ENCODE measurements at regions of chr6 and their contacts with region 1.

Region 1: DNA sequence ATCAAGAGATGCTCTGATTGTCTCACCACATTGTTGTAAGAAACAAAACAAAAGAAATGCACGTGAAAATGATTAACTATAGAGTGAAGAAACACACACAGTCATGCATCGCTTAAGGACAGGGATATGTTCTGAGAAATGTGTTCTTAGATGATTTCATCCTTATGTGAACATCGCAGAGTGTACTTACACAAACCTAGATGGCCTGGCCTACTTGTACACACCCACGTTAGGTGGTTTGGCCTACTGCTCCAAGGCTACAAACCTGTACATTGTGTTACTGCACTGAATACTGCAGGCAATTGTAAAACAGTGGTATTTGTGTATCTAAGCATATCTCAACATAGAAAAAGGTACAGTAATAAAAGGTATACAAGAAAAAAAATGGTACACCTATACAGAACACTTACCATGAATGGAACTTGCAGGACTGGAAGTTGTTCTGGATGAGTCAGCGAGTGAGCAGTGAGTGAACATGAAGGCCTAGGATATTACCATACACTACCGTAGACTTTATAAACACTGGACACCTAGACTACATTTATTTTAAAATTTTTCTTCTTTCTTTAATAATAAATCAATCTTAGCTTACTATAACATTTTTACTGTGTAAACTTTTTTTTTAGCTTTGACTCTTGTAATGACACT is 48.6 kb downstream of the FKBP5 start:
- DNase-seq: no peak
- H3K4me3 ChIP-seq: no peak overlapping the region
- H3K27ac ChIP-seq: peak overlapping the region in 1 of 4 donors; percentile 41
- H3K4me1 ChIP-seq: peaks cover 10 to 90% (median 82%) of the 10 kb centered on the region in 4 donors
- H3K27me3 ChIP-seq: no peaks in the 10 kb centered on the region
- CTCF ChIP-seq: no peak
- EP300 ChIP-seq: no peak
- POLR2A ChIP-seq: no peak

Region 2: GRCh38 chr6:35522660-35523658 is 117.2 kb before region 1 on chr6:
- intact Hi-C with region 1: no loop called
- DNase-seq: peak; percentile 96
- H3K4me3 ChIP-seq: peak overlapping the region; percentile 5 to 38 (median 26)
- H3K27ac ChIP-seq: no peak overlapping the region
- H3K4me1 ChIP-seq: peaks cover 0 to 10% (median 6%) of the 10 kb centered on the region in 4 donors
- H3K27me3 ChIP-seq: no peaks in the 10 kb centered on the region
- CTCF ChIP-seq: peak in 2 of 3 experiments; percentile 98
- EP300 ChIP-seq: no peak
- POLR2A ChIP-seq: no peak

Region 3: GRCh38 chr6:35576682-35577081 is 63.5 kb before region 1 on chr6:
- intact Hi-C with region 1: loop called (anchors 5 kb)
- DNase-seq: no peak
- H3K4me3 ChIP-seq: no peak overlapping the region
- H3K27ac ChIP-seq: no peak overlapping the region
- H3K4me1 ChIP-seq: peaks cover 0 to 9% (median 0%) of the 10 kb centered on the region in 4 donors
- H3K27me3 ChIP-seq: no peaks in the 10 kb centered on the region
- CTCF ChIP-seq: no peak
- EP300 ChIP-seq: no peak
- POLR2A ChIP-seq: no peak

Region 4: DNA sequence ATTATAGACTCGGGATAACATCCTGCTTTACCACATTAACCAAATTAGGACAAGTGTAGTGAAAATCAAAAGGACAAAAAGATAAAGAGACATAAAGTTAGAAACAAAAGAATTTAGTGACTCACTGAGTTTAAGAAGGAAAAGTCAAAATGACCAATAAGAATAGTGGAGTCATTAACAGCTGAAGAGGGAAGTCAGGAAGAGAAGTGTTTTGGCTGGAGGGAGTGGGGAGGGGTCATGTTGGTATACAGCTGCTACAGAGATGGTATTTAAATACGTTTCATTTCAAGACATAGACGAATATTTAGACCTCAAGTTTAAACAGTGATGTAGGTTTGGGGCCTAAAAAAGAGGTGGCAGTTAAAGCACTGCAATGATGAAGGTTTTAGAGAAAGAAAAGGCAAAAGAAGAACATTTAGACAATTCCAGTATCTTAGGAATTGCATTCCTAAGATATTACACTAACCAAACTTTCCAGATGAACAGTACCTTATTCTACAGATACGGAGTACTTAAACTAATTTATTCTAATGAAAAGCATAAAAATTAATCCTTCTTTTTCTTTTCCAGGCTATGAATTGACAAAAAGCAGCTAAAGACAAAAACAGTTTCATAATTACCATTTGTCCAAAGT is 38.0 kb after region 1 on chr6:
- intact Hi-C with region 1: loop called (anchors 5 kb)
- DNase-seq: no peak
- H3K4me3 ChIP-seq: peak overlapping the region in 1 of 4 donors; percentile 13
- H3K27ac ChIP-seq: no peak overlapping the region
- H3K4me1 ChIP-seq: peaks cover 57 to 100% (median 95%) of the 10 kb centered on the region in 4 donors
- H3K27me3 ChIP-seq: no peaks in the 10 kb centered on the region
- CTCF ChIP-seq: no peak
- EP300 ChIP-seq: no peak
- POLR2A ChIP-seq: no peak

Region 5: GRCh38 chr6:35765739-35766138 is 125.6 kb after region 1 on chr6:
- intact Hi-C with region 1: no loop called
- DNase-seq: no peak
- H3K4me3 ChIP-seq: no peak overlapping the region
- H3K27ac ChIP-seq: no peak overlapping the region
- H3K4me1 ChIP-seq: peaks cover 0 to 8% (median 3%) of the 10 kb centered on the region in 4 donors
- H3K27me3 ChIP-seq: peaks cover 0 to 56% (median 15%) of the 10 kb centered on the region in 4 donors
- CTCF ChIP-seq: no peak
- EP300 ChIP-seq: no peak
- POLR2A ChIP-seq: no peak

Measured in esophagus muscularis mucosa (tissue), 4 donors.